Calu3 (cell line): ENCODE measurements at regions of chr2 and their contacts with region 1.

Region 1: DNA sequence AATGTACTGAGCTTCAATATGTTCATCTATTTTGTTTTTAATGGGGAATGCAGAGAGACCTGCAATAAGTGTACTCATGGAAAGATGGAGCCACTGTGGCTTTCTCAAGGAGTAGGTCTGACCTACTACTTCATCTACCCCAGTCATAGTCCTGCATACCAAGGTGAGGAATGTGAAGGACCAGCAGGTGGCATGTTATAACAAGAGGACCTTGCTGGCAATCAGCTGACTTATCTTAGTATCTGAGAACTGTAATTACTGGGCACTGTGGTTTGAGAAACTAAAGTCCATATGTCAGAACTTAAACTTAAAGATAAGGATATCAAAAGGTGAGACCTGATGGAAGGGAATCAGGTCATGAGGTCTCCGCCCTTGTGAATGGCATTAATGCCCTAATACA is 1104.2 kb downstream of the BCL11A start:
- DNase-seq: peak; percentile 16
- H3K4me3 Mint-ChIP-seq: no peak overlapping the region
- H3K27ac Mint-ChIP-seq: no peak overlapping the region
- H3K4me1 Mint-ChIP-seq: no peaks in the 10 kb centered on the region
- H3K27me3 Mint-ChIP-seq: no peaks in the 10 kb centered on the region
- CTCF ChIP-seq: no peak

Region 2: GRCh38 chr2:59266453-59266852 is 182.8 kb before region 1 on chr2:
- CTCF ChIA-PET with region 1: no interaction called
- intact Hi-C with region 1: no loop called
- DNase-seq: no peak
- H3K4me3 Mint-ChIP-seq: no peak overlapping the region
- H3K27ac Mint-ChIP-seq: no peak overlapping the region
- H3K4me1 Mint-ChIP-seq: no peaks in the 10 kb centered on the region
- H3K27me3 Mint-ChIP-seq: no peaks in the 10 kb centered on the region
- CTCF ChIP-seq: no peak

Region 3: DNA sequence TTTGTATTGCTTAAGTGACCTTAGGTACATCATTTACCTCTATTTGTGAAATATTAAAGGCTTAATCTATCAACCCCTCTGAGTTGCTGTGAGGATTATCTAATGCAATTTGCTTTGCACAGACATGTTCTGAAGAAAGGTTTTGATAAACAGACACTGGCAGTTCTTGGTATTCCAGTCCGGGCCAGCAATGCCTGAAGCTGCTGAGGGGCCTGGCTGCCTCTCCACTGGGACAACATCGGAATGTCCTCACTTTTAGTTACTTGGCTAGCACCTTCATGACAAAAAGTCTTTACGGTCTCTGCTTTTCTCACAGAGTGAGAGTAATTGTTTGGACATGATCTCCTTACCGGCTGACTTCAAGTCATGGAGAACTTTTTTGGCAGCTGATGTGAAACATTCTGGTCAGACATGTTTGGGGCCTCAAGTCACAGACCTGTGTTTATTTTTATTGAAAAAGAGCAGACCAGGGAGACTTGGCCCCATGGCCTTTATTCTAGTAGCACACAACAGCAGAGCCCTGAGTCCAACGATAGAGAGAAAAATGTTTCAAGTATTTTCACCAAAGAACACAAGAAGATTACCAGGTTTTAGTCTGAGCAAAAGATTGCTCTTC is 95.9 kb before region 1 on chr2:
- CTCF ChIA-PET with region 1: no interaction called
- intact Hi-C with region 1: no loop called
- DNase-seq: no peak
- H3K4me3 Mint-ChIP-seq: no peak overlapping the region
- H3K27ac Mint-ChIP-seq: no peak overlapping the region
- H3K4me1 Mint-ChIP-seq: no peaks in the 10 kb centered on the region
- H3K27me3 Mint-ChIP-seq: no peaks in the 10 kb centered on the region
- CTCF ChIP-seq: no peak

Region 4: GRCh38 chr2:59435635-59436034 is 13.6 kb before region 1 on chr2:
- CTCF ChIA-PET with region 1: no interaction called
- intact Hi-C with region 1: no loop called
- DNase-seq: no peak
- H3K4me3 Mint-ChIP-seq: no peak overlapping the region
- H3K27ac Mint-ChIP-seq: no peak overlapping the region
- H3K4me1 Mint-ChIP-seq: no peaks in the 10 kb centered on the region
- H3K27me3 Mint-ChIP-seq: no peaks in the 10 kb centered on the region
- CTCF ChIP-seq: no peak

Region 5: DNA sequence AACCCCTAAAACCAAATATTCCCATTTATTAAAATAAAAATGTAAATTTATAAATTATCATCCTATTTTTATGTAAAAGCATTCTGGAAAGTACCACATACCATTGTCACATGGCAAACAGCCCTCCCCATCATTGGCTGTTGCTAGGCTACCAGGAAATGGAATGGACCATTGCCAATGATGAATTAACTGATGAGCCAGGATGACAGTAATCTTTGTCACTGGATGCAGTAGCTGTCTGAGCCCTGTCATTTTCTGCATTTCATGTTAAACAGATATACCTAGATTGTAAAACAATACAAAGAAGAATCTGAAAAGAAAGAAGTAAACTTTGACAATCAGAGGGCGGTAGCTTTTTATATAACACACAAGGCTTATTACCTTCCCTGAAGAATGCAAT is 462.8 kb after region 1 on chr2:
- CTCF ChIA-PET with region 1: no interaction called
- intact Hi-C with region 1: loop called (anchors 10 kb)
- DNase-seq: no peak
- H3K4me3 Mint-ChIP-seq: no peak overlapping the region
- H3K27ac Mint-ChIP-seq: no peak overlapping the region
- H3K4me1 Mint-ChIP-seq: no peaks in the 10 kb centered on the region
- H3K27me3 Mint-ChIP-seq: peaks cover 16% of the 10 kb centered on the region
- CTCF ChIP-seq: no peak

Region 6: GRCh38 chr2:59932341-59932740 is 483.1 kb after region 1 on chr2:
- CTCF ChIA-PET with region 1: no interaction called
- intact Hi-C with region 1: loop called (anchors 2 kb)
- DNase-seq: no peak
- H3K4me3 Mint-ChIP-seq: no peak overlapping the region
- H3K27ac Mint-ChIP-seq: no peak overlapping the region
- H3K4me1 Mint-ChIP-seq: no peaks in the 10 kb centered on the region
- H3K27me3 Mint-ChIP-seq: no peaks in the 10 kb centered on the region
- CTCF ChIP-seq: no peak

Region 7: DNA sequence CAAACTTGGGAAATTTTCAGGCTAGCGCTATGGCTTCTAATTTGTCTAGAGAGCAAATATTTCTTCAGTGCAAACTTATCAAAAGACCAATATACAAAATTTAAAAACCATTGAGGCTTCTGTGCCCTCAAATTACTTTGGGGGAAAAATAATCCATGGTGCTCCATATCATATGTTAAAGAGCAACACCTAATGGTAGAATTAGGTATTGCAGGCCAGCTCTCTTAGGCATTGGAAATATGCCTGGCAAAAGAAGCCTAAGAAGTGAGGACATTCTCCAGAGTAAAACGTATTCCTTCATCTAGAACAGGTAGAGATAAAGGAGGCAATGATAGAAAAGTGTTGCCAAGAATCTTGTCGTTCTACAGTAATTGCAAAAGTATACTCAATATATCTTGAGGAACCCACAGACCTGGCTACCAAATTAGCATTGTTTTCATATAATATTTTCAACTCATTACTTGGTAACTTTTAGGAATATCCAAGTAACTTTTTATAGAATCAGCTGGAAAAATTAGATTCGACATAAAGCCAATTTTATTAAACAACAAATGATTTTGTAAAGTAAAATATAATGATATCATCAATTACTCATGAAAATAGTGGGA is 703.1 kb after region 1 on chr2:
- CTCF ChIA-PET with region 1: no interaction called
- intact Hi-C with region 1: loop called (anchors 5 kb)
- DNase-seq: peak; percentile 8
- H3K4me3 Mint-ChIP-seq: no peak overlapping the region
- H3K27ac Mint-ChIP-seq: no peak overlapping the region
- H3K4me1 Mint-ChIP-seq: no peaks in the 10 kb centered on the region
- H3K27me3 Mint-ChIP-seq: no peaks in the 10 kb centered on the region
- CTCF ChIP-seq: peak; percentile 61